CD4-positive, alpha-beta memory T cell (primary cell): ENCODE measurements at regions of chr14 and their contacts with region 1.

Region 1: GRCh38 chr14:38079268-38079667 is 128.4 kb upstream of the SSTR1 start:
- DNase-seq: no peak
- H3K4me3 ChIP-seq: no peak overlapping the region
- H3K4me3 Mint-ChIP-seq: peak overlapping the region in 6 of 8 donors; percentile 10 to 86 (median 76)
- H3K27ac ChIP-seq: peak overlapping the region; percentile 6
- H3K27ac Mint-ChIP-seq: peak overlapping the region; percentile 82 to 96 (median 91)
- H3K4me1 ChIP-seq: peaks cover 57% of the 10 kb centered on the region
- H3K4me1 Mint-ChIP-seq: peaks cover 46 to 75% (median 59%) of the 10 kb centered on the region in 4 donors
- H3K27me3 ChIP-seq: no peaks in the 10 kb centered on the region
- H3K27me3 Mint-ChIP-seq: no peaks in the 10 kb centered on the region

Region 2: DNA sequence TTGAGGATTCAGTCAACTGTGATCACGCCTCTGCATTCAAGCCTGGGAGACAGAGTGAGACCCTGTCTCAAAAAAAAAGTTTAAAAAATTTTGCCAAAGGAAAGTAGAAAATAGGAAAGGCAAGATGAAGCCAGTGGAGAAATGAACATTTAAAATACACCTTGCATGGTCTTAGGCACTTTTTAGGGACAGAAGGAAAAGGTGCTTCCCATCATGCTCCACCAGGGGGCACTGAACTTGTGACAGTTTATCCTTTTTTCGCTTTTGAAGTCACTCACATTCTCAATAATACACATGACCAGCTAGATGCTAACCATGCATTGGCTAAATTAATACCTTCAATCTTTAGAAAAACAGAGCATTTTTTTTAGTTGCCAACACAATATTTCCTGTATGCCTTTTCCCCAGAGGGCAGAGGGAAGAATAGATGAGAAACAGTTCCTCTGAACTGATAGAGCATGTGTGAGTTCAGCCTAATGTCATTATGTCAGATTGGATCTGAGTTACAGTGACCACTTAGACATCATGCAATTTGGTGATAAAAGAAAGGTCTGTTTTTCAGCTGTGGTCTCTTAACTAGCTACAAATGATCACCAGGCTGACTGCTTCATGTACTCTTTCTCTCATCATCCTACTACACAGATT is 93.3 kb before region 1 on chr14:
- CTCF ChIA-PET with region 1: no interaction called
- POLR2A ChIA-PET with region 1: no interaction called
- intact Hi-C with region 1: loop called (anchors 2 kb)
- DNase-seq: peak; percentile 35 to 55 (median 48)
- H3K4me3 ChIP-seq: no peak overlapping the region
- H3K4me3 Mint-ChIP-seq: no peak overlapping the region
- H3K27ac ChIP-seq: no peak overlapping the region
- H3K27ac Mint-ChIP-seq: no peak overlapping the region
- H3K4me1 ChIP-seq: no peaks in the 10 kb centered on the region
- H3K4me1 Mint-ChIP-seq: peaks cover 5 to 6% (median 5%) of the 10 kb centered on the region in 4 donors
- H3K27me3 ChIP-seq: no peaks in the 10 kb centered on the region
- H3K27me3 Mint-ChIP-seq: no peaks in the 10 kb centered on the region

Region 3: GRCh38 chr14:38004610-38004879 is 74.7 kb before region 1 on chr14:
- CTCF ChIA-PET with region 1: no interaction called
- POLR2A ChIA-PET with region 1: no interaction called
- intact Hi-C with region 1: no loop called
- DNase-seq: no peak
- H3K4me3 ChIP-seq: no peak overlapping the region
- H3K4me3 Mint-ChIP-seq: no peak overlapping the region
- H3K27ac ChIP-seq: no peak overlapping the region
- H3K27ac Mint-ChIP-seq: no peak overlapping the region
- H3K4me1 ChIP-seq: no peaks in the 10 kb centered on the region
- H3K4me1 Mint-ChIP-seq: peaks cover 0 to 5% (median 2%) of the 10 kb centered on the region in 4 donors
- H3K27me3 ChIP-seq: no peaks in the 10 kb centered on the region
- H3K27me3 Mint-ChIP-seq: peaks cover 0 to 2% of the 10 kb centered on the region in 2 donors

Region 4: DNA sequence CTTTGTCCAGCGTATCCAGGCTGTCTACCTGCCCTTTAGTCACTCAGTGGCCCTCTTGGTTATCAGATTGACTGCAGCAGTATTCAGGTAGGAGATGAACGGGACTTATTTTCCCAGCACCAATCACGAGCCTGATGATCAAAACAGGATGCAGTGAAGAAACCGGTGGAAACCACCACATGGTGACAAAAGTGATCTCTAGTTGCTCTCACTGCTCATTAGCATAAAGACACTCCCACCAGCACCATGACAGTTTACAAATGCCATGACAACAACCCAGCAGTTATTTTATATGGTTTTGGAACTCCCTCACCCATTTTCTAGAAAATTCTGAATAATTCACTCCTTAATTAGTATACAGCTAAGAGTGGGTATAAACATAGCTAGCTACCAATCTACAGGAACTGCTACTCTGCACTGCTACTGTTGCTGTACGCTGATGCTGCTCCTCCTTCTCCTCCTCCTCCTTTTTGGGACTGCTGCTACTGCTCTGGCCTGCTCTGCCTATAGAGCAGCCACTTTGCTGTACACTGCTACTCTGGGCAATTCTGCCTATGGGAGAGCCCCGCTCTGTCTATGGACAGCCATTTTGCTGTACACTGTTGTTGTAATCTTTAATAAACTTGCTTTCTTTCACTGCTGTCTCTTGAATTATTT is 14.0 kb before region 1 on chr14:
- CTCF ChIA-PET with region 1: no interaction called
- POLR2A ChIA-PET with region 1: interaction called, 5 read pairs
- intact Hi-C with region 1: loop called (anchors 1 kb)
- DNase-seq: peak; percentile 80 to 93 (median 83)
- H3K4me3 ChIP-seq: no peak overlapping the region
- H3K4me3 Mint-ChIP-seq: peak overlapping the region; percentile 43 to 77 (median 68)
- H3K27ac ChIP-seq: peak overlapping the region; percentile 88
- H3K27ac Mint-ChIP-seq: peak overlapping the region; percentile 92 to 99 (median 95)
- H3K4me1 ChIP-seq: peaks cover 52% of the 10 kb centered on the region
- H3K4me1 Mint-ChIP-seq: peaks cover 32 to 47% (median 34%) of the 10 kb centered on the region in 4 donors
- H3K27me3 ChIP-seq: no peaks in the 10 kb centered on the region
- H3K27me3 Mint-ChIP-seq: no peaks in the 10 kb centered on the region

Region 5: GRCh38 chr14:38120109-38120508 is 40.8 kb after region 1 on chr14:
- CTCF ChIA-PET with region 1: no interaction called
- POLR2A ChIA-PET with region 1: no interaction called
- intact Hi-C with region 1: no loop called
- DNase-seq: no peak
- H3K4me3 ChIP-seq: no peak overlapping the region
- H3K4me3 Mint-ChIP-seq: no peak overlapping the region
- H3K27ac ChIP-seq: no peak overlapping the region
- H3K27ac Mint-ChIP-seq: no peak overlapping the region
- H3K4me1 ChIP-seq: peaks cover 10% of the 10 kb centered on the region
- H3K4me1 Mint-ChIP-seq: peaks cover 18 to 26% (median 21%) of the 10 kb centered on the region in 4 donors
- H3K27me3 ChIP-seq: no peaks in the 10 kb centered on the region
- H3K27me3 Mint-ChIP-seq: no peaks in the 10 kb centered on the region

Region 6: DNA sequence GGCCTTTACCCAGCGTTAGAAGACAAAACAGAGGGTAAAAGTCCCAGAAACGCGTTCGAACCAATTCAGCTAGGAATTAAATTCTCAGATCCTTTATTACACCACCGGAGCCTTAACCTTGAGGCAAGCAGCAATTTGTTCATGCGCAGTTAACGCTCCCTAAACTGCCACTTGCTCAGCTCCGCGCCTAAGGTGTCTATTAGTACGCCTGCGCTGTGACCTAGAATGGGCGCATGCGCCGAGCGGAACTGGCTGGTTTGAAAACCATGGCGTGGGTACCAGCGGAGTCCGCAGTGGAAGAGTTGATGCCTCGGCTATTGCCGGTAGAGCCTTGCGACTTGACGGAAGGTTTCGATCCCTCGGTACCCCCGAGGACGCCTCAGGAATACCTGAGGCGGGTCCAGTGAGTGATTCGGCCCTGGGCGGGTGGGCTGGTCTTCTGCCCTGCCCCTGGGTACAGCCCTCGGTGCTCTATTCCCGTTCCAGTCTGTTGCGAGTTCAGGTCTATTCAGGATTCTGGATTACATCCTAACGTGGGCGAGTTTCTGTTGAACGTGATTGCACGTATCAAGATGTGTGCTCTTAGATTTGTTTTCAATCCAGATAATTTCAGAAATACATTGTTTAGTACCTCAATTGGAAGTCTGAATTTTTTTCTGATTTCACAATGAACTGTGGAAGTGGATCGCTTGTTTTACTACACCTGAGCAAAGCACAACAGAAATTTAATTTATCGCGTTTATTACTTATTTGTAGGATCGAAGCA is 1035.0 kb after region 1 on chr14 and contains the start of gene GEMIN2:
- CTCF ChIA-PET with region 1: no interaction called
- POLR2A ChIA-PET with region 1: no interaction called
- intact Hi-C with region 1: loop called (anchors 10 kb)
- DNase-seq: peak; percentile 92 to 95 (median 94)
- H3K4me3 ChIP-seq: peak within 1 kb of the TSS; percentile 66 to 81
- H3K4me3 Mint-ChIP-seq: peak within 1 kb of the TSS; percentile 92 to 99 (median 97)
- H3K27ac ChIP-seq: peak within 1 kb of the TSS; percentile 80
- H3K27ac Mint-ChIP-seq: peak within 1 kb of the TSS; percentile 93 to 99 (median 97)
- H3K4me1 ChIP-seq: peaks cover 13% of the 10 kb centered on the region
- H3K4me1 Mint-ChIP-seq: peaks cover 12 to 25% (median 17%) of the 10 kb centered on the region in 4 donors
- H3K27me3 ChIP-seq: no peaks in the 10 kb centered on the region
- H3K27me3 Mint-ChIP-seq: peaks cover 2 to 6% of the 10 kb centered on the region in 2 donors
- total RNA-seq, gene GEMIN2: 13.4 to 16.9 TPM